AG04450 (cell line): ENCODE measurements at regions of chr4 and their contacts with region 1.

Region 1: GRCh38 chr4:137705171-137705783 is 173.0 kb upstream of the PCDH18 start:
- DNase-seq: peak; percentile 94
- H3K4me3 ChIP-seq: no peak overlapping the region
- H3K27ac ChIP-seq: no peak overlapping the region
- H3K27me3 ChIP-seq: no peaks in the 10 kb centered on the region
- CTCF ChIP-seq: no peak

Region 2: DNA sequence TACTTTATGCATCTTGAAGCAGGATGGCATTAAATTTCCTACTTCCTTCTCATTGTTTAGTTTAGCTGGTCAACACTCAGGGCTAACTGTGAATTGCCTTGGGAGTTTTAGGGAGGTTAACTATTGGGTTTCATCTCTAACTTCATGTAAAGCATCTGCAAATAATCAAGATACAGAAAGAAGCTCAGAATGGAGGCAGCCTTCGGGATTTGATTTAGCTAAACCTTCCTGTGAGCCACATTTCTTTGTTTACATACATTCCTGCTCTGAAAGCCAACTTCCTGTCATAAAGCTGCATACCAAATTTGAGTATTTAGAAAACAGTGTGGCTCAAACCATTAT is 41.3 kb before region 1 on chr4:
- CTCF ChIA-PET with region 1: interaction called, 3 read pairs
- POLR2A ChIA-PET with region 1: interaction called, 12 read pairs
- DNase-seq: peak; percentile 78
- H3K4me3 ChIP-seq: no peak overlapping the region
- H3K27ac ChIP-seq: peak overlapping the region; percentile 32
- H3K27me3 ChIP-seq: no peaks in the 10 kb centered on the region
- CTCF ChIP-seq: no peak